ENCODE measurements at regions of chr3 and their contacts with region 1.

Region 1: DNA sequence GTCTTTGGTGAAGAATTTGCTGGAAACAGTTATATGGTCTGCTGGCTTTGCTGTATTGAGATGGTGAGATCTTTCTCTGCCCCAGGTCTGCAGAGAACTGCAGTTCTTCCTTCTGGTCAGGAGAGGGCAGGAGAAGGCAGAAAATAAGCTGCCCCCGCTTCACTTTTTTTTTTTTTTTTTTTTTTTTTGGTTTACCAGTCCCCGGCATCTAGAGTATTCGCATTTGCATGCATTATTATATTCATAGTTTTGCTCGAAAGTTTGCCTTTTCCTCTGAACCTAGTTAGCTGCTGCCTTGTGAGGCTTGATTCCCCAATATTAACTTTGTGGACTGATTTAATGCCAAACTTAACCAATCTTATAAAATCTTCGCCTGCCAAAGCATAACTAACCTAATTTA is 10.6 kb upstream of the PARL start:
- DNase-seq: peak; percentile 44 to 50 (median 47)
- H3K4me3 ChIP-seq: no peak overlapping the region
- H3K4me3 Mint-ChIP-seq: no peak overlapping the region
- H3K27ac ChIP-seq: no peak overlapping the region
- H3K27ac Mint-ChIP-seq: no peak overlapping the region
- H3K4me1 ChIP-seq: no peaks in the 10 kb centered on the region
- H3K4me1 Mint-ChIP-seq: peaks cover 5% of the 10 kb centered on the region
- H3K27me3 ChIP-seq: no peaks in the 10 kb centered on the region
- H3K27me3 Mint-ChIP-seq: peaks cover 4 to 11% (median 10%) of the 10 kb centered on the region in 3 donors
- CTCF ChIP-seq: peak; percentile 86

Region 2: GRCh38 chr3:183629546-183630301 is 265.6 kb before region 1 on chr3:
- intact Hi-C with region 1: no loop called
- DNase-seq: no peak
- H3K4me3 ChIP-seq: no peak overlapping the region
- H3K4me3 Mint-ChIP-seq: no peak overlapping the region
- H3K27ac ChIP-seq: no peak overlapping the region
- H3K27ac Mint-ChIP-seq: no peak overlapping the region
- H3K4me1 ChIP-seq: peaks cover under 1 to 2% of the 10 kb centered on the region in 2 donors
- H3K4me1 Mint-ChIP-seq: peaks cover 3% of the 10 kb centered on the region
- H3K27me3 ChIP-seq: no peaks in the 10 kb centered on the region
- H3K27me3 Mint-ChIP-seq: peaks cover 0 to 2% (median 2%) of the 10 kb centered on the region in 3 donors
- CTCF ChIP-seq: no peak

Region 3: DNA sequence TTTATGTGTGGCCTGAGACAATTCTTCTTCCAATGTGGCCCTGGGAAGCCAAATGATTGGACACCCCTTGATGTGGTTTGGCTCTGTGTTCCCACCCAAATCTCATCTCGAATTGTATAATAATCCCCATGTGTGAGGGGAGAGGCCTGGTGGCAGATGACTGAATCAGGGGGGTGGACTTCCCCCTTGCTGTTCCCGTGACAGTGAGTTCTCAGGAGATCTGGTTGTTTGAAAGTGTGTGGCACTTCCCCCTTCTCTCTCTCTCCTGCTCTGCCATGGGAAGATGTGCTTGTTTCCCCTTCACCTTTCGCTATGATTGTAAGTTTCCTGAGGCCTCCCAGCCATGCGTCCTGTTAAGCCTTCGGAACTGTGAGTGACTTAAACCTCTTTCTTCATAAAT is 49.5 kb after region 1 on chr3:
- intact Hi-C with region 1: no loop called
- DNase-seq: peak in 1 of 3 donors; percentile 12
- H3K4me3 ChIP-seq: no peak overlapping the region
- H3K4me3 Mint-ChIP-seq: no peak overlapping the region
- H3K27ac ChIP-seq: peak overlapping the region in 1 of 2 donors; percentile 26
- H3K27ac Mint-ChIP-seq: peak overlapping the region in 1 of 7 donors; percentile 11
- H3K4me1 ChIP-seq: no peaks in the 10 kb centered on the region
- H3K4me1 Mint-ChIP-seq: peaks cover 1% of the 10 kb centered on the region
- H3K27me3 ChIP-seq: no peaks in the 10 kb centered on the region
- H3K27me3 Mint-ChIP-seq: no peaks in the 10 kb centered on the region
- CTCF ChIP-seq: no peak

Region 4: DNA sequence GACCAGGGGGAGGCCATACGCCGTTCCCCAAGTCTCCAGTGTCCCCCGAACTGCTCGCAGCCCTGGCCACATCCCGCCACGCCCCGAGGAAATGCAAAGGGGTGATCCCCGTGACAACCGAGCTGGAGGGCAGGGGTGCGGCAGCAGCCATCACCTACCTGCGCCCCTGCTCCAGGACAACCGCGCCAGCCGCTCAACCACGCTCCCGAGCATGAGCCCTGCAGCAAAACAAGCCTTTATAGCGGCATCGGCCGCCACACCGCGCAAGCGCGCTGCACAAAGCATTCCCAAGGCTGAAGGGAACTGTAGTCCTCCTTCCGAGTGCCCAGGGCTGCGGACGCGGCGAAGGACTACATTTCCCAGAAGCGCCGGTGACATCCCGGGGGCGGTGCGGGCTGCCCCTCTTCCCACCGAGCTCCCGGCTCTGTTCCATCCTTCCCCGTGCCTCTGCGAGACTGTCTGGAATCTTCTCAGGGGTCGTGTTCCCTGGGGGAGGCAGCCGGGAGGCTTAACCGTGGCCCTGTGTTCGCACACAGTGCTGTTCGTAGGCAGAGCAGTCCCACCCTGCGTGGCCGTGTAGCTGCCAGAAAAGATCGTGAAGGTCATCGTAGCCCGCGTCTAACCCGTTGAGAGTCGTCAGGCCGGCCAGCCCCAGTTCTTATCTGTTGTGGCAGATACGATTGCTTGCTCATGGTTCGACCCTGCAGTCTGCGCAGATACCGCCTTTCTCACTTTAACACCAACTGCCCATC is 122.6 kb after region 1 on chr3 and contains the start of gene ABCC5:
- intact Hi-C with region 1: loop called (anchors 5 to 10 kb)
- DNase-seq: peak; percentile 75 to 85 (median 80)
- H3K4me3 ChIP-seq: peak within 1 kb of the TSS; percentile 88 to 100 (median 100)
- H3K4me3 Mint-ChIP-seq: peak within 1 kb of the TSS; percentile 96 to 97
- H3K27ac ChIP-seq: peak within 1 kb of the TSS; percentile 43 to 82
- H3K27ac Mint-ChIP-seq: peak within 1 kb of the TSS; percentile 30 to 94 (median 81)
- H3K4me1 ChIP-seq: peaks cover 36 to 45% of the 10 kb centered on the region in 2 donors
- H3K4me1 Mint-ChIP-seq: peaks cover 42% of the 10 kb centered on the region
- H3K27me3 ChIP-seq: no peaks in the 10 kb centered on the region
- H3K27me3 Mint-ChIP-seq: peaks cover 5 to 8% (median 7%) of the 10 kb centered on the region in 3 donors
- CTCF ChIP-seq: peak; percentile 85
- polyA plus RNA-seq, gene ABCC5: 6.2 to 30.9 (median 7.7) TPM

Region 5: GRCh38 chr3:184110316-184110725 is 215.0 kb after region 1 on chr3:
- intact Hi-C with region 1: no loop called
- DNase-seq: no peak
- H3K4me3 ChIP-seq: no peak overlapping the region
- H3K4me3 Mint-ChIP-seq: no peak overlapping the region
- H3K27ac ChIP-seq: no peak overlapping the region
- H3K27ac Mint-ChIP-seq: no peak overlapping the region
- H3K4me1 ChIP-seq: no peaks in the 10 kb centered on the region
- H3K4me1 Mint-ChIP-seq: no peaks in the 10 kb centered on the region
- H3K27me3 ChIP-seq: no peaks in the 10 kb centered on the region
- H3K27me3 Mint-ChIP-seq: peaks cover 1 to 9% (median 7%) of the 10 kb centered on the region in 3 donors
- CTCF ChIP-seq: no peak

Region 6: GRCh38 chr3:184145111-184145524 is 249.8 kb after region 1 on chr3:
- intact Hi-C with region 1: loop called in 1 of 2 experiments (anchors 10 kb)
- DNase-seq: peak in 1 of 3 donors; percentile 10
- H3K4me3 ChIP-seq: no peak overlapping the region
- H3K4me3 Mint-ChIP-seq: no peak overlapping the region
- H3K27ac ChIP-seq: no peak overlapping the region
- H3K27ac Mint-ChIP-seq: no peak overlapping the region
- H3K4me1 ChIP-seq: no peaks in the 10 kb centered on the region
- H3K4me1 Mint-ChIP-seq: peaks cover 2% of the 10 kb centered on the region
- H3K27me3 ChIP-seq: no peaks in the 10 kb centered on the region
- H3K27me3 Mint-ChIP-seq: peaks cover 0 to 2% (median 0%) of the 10 kb centered on the region in 3 donors
- CTCF ChIP-seq: no peak

Region 7: GRCh38 chr3:184289426-184289938 is 394.2 kb after region 1 on chr3:
- intact Hi-C with region 1: loop called (anchors 10 kb)
- DNase-seq: peak; percentile 19 to 44 (median 33)
- H3K4me3 ChIP-seq: no peak overlapping the region
- H3K4me3 Mint-ChIP-seq: peak overlapping the region in 1 of 2 donors; percentile 21
- H3K27ac ChIP-seq: no peak overlapping the region
- H3K27ac Mint-ChIP-seq: no peak overlapping the region
- H3K4me1 ChIP-seq: peaks cover 5 to 7% of the 10 kb centered on the region in 2 donors
- H3K4me1 Mint-ChIP-seq: peaks cover 10% of the 10 kb centered on the region
- H3K27me3 ChIP-seq: peaks cover 0 to 3% of the 10 kb centered on the region in 2 donors
- H3K27me3 Mint-ChIP-seq: peaks cover 6 to 31% (median 30%) of the 10 kb centered on the region in 3 donors
- CTCF ChIP-seq: peak; percentile 82